ENCODE measurements at regions of chr13 and their contacts with region 1.

Region 1: DNA sequence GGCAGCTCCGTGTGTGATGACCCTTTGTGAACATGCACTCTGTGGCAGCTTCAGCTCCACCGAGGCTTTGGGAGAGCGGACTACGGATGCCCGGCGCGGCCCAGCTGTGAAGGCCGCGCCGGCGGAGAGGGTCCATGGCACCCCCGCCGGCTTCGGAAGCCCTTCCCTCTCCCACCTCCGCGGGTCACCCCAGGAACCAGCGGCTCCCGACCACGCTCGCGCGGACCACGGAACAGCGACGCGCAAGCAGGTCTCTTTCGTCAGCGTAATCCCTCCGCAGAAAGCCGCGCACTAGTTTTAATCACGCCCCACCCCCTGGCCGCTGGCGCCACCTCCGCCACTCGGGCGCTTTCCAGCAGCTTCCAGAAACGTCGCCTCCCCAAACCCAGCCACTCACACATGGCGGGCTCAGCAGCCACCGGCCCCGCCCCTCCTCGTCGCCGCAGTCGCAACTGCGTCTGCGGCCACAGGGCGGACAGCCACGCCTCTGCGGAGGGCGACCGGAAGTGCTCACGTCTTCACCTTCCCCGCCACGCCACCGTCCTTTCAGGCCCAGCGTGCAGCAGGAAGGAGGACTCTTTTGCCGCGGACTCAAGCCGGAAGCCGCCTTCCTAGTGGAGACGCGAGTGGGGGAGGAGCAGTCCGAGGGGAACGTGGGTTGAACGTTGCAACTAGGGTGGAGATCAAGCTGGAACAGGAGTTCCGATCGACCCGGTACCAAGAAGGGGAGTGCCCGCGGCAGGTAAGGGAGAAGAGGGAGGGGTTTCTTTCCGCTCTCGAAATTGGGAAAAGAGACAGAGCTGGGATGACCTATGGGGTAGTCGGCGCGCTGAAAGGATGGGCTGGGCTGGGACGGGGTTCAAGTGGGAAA is at the start of gene USPL1:
- DNase-seq: peak; percentile 98 to 99
- ATAC-seq: peak; percentile 95 to 99 (median 97)
- H3K4me3 ChIP-seq: peak within 1 kb of the TSS; percentile 63 to 91 (median 80)
- H3K27ac ChIP-seq: peak within 1 kb of the TSS; percentile 96 to 100 (median 99)
- H3K4me1 ChIP-seq: peaks cover 0 to 44% (median 27%) of the 10 kb centered on the region in 9 donors
- H3K27me3 ChIP-seq: no peaks in the 10 kb centered on the region
- CTCF ChIP-seq: peak in 8 of 9 donors; percentile 14 to 47 (median 38)
- total RNA-seq, gene USPL1: 8.9 to 10.6 (median 9.8) TPM

Region 2: DNA sequence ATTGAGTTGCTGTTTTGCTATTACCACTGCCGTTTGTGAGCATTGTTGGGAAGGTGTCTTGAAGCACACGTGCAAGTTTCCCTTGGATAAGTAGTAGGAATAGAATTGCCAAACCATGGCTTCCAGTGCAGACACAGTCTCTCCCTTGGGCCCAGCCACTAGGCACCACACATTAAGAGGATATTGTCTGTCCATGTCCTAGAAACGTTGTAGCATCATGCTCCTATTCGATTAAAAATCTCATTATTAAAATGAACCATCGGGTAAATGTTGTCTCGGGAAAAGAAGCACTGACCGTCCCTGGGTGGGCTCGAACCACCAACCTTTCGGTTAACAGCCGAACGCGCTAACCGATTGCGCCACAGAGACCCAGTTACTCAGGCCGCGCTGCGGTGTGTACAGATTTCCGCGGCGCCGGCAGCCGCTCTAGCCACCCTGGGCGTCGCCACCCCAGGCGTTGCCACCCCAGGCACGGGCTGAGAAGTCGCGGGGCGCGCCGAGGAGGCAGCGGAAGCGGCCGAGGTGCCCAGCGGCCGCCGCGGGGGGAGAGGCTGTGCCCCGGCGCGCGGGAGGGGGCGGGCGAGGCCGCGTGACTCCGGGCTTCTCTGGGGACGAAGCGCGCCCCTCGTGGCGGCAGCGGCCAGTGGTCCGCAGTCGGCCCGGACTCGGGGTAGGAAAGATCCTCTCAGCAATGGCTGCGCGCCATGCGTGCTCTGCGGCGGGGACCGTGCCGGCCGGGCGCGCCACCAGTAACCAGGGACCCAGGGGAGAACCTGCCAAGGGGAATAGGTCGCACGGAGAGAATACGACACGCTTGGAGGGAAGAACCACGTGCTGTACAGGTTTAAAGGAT is 56.3 kb after region 1 on chr13:
- intact Hi-C with region 1: loop called in 2 of 10 experiments (anchors 2 to 5 kb)
- DNase-seq: peak; percentile 86 to 90
- ATAC-seq: peak; percentile 93 to 97 (median 96)
- H3K4me3 ChIP-seq: peak overlapping the region in 9 of 10 donors; percentile 33 to 67 (median 59)
- H3K27ac ChIP-seq: peak overlapping the region; percentile 49 to 84 (median 76)
- H3K4me1 ChIP-seq: peaks cover 0 to 11% (median 7%) of the 10 kb centered on the region in 9 donors
- H3K27me3 ChIP-seq: no peaks in the 10 kb centered on the region
- CTCF ChIP-seq: peak; percentile 63 to 93 (median 81)